PC-3 (cell line): ENCODE measurements at regions of chr20 and their contacts with region 1.

Region 1: DNA sequence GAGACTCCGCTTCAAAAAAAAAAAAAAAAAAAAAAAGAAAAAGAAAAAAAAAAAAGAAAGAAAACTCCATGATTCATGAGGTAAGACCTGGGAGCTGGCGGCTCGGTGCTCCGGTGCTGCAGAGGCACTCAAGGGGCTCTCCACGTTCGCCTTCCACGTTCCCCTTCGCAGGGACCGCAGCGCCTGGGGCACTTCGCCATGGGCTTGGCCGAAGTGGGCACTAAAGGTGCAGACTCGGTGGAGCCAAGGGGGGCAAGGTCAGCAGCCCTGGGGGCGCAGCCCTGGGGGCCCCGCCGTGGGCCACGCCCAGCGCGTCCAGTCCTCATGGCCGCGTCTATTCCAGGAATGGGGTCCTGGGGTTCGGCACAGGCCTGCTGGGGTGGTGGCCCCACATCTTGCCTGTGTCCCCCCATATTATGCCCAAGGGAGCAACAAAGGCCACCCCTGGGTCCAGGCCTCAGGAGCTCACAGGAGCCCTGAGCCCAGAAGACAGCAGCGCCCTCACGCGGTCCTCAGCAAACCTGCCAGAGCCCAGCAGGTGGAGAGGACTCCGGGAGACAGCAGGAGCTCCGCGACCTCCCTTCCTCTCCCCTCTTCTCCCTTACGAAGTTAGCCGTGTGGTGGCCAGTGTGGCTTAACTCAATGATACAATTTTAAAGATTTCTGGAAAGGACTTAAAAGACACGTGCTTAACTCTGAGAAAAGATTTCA is 21.9 kb downstream of the ZBTB46 start:
- DNase-seq: no peak
- ATAC-seq: no peak
- H3K4me3 ChIP-seq: no peak overlapping the region
- H3K27ac ChIP-seq: no peak overlapping the region
- H3K4me1 ChIP-seq: no peaks in the 10 kb centered on the region
- H3K27me3 ChIP-seq: no peaks in the 10 kb centered on the region
- CTCF ChIP-seq: no peak

Region 2: GRCh38 chr20:63216041-63216848 is 592.9 kb before region 1 on chr20 and contains the start of gene YTHDF1:
- CTCF ChIA-PET with region 1: no interaction called
- POLR2A ChIA-PET with region 1: interaction called, 10 read pairs
- intact Hi-C with region 1: no loop called
- DNase-seq: peak; percentile 97
- ATAC-seq: peak; percentile 89
- H3K4me3 ChIP-seq: peak within 1 kb of the TSS; percentile 100
- H3K27ac ChIP-seq: peak within 1 kb of the TSS; percentile 31
- H3K4me1 ChIP-seq: peaks cover 36% of the 10 kb centered on the region
- H3K27me3 ChIP-seq: no peaks in the 10 kb centered on the region
- CTCF ChIP-seq: no peak
- total RNA-seq, gene YTHDF1: 30.0 and 34.0 TPM in 2 replicates

Region 3: DNA sequence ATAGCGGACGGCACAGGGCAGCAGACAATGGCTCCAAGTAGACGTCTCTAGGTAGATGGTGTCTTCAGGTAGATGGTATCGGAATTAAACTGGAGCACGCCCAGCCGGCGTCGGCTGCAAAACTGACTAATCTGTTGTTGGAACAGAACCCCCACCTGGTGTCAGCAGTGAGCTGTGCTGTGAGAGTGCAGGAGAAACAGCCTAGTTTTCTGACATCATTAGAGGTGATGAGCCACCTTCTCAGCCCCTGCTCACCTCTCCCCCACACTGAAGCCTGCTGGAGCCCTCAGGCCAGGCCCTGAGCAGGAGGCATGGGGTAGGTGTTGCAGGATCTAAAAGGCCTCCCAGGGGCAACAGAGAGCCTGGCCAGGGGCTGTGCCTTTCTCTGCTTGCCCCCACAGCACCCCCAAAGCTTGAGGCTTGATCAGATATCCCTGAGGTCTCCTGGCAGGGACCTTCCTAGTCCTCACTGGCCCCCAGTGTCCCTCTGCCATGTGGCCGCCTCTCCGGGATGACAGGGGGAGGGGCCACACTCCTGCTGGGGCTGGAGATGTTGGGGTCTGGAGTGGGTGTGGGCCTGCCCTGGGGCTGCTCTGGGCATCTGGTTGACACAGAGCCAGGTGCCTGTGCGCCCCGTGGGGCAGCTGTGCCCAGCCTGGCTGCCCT is 228.2 kb before region 1 on chr20:
- CTCF ChIA-PET with region 1: no interaction called
- POLR2A ChIA-PET with region 1: no interaction called
- intact Hi-C with region 1: no loop called
- DNase-seq: peak; percentile 86
- ATAC-seq: peak; percentile 95
- H3K4me3 ChIP-seq: no peak overlapping the region
- H3K27ac ChIP-seq: peak overlapping the region; percentile 7; the same call in 1 of the 2 replicates
- H3K4me1 ChIP-seq: peaks cover 5% of the 10 kb centered on the region
- H3K27me3 ChIP-seq: no peaks in the 10 kb centered on the region
- CTCF ChIP-seq: peak; percentile 85

Region 4: GRCh38 chr20:63751471-63752271 is 57.4 kb before region 1 on chr20:
- CTCF ChIA-PET with region 1: no interaction called
- POLR2A ChIA-PET with region 1: no interaction called
- intact Hi-C with region 1: no loop called
- DNase-seq: no peak
- ATAC-seq: no peak
- H3K4me3 ChIP-seq: no peak overlapping the region
- H3K27ac ChIP-seq: no peak overlapping the region
- H3K4me1 ChIP-seq: no peaks in the 10 kb centered on the region
- H3K27me3 ChIP-seq: no peaks in the 10 kb centered on the region
- CTCF ChIP-seq: no peak